CD4-positive, alpha-beta memory T cell (primary cell): ENCODE measurements at regions of chr9 and their contacts with region 1.

Region 1: DNA sequence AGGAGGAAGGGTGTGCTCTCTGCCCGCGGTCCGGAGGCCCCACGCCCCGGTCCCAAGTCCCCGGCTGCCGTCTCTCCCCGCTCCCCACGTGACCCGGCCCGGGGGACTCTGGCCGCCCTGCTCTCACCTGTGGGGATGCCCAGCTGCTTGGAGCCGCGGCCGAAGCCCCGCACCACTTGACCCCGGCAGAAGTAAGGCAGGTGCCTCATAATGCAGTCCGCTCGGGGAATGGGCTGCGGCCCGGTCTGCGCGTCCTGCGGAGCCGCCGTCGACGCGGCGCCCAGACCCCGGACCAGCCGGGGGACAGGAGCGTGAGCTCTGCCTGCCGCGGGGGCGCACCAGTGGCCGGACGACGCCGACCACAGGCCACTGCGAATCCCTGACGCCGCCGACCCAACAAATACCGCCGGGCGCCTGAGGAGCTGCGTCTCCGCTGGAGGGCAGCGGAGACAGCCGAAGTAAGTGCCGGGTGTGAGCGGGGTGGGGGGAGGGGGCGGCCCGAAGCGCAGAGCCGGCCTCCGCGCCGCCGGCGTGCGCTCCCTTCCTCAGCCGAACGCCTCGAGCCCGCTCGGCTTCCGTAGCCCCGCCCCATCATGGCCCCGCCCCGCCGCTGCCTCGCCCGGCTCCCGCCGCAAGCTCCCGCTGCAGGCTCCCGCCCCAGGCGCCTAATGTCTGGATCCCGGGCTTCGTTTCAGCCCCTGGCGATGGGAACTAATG is at the start of gene RFK:
- DNase-seq: peak; percentile 90 to 96 (median 93)
- H3K4me3 ChIP-seq: peak within 1 kb of the TSS; percentile 72 to 74
- H3K4me3 Mint-ChIP-seq: peak within 1 kb of the TSS; percentile 91 to 98 (median 95)
- H3K27ac ChIP-seq: peak within 1 kb of the TSS; percentile 79
- H3K27ac Mint-ChIP-seq: peak within 1 kb of the TSS; percentile 94 to 100 (median 98)
- H3K4me1 ChIP-seq: peaks cover 25% of the 10 kb centered on the region
- H3K4me1 Mint-ChIP-seq: peaks cover 12 to 38% (median 25%) of the 10 kb centered on the region in 4 donors
- H3K27me3 ChIP-seq: no peaks in the 10 kb centered on the region
- H3K27me3 Mint-ChIP-seq: no peaks in the 10 kb centered on the region
- total RNA-seq, gene RFK: 13.5 to 16.8 TPM

Region 2: GRCh38 chr9:75890472-75891276 is 503.4 kb before region 1 on chr9 and contains the start of gene PCSK5:
- CTCF ChIA-PET with region 1: no interaction called
- POLR2A ChIA-PET with region 1: interaction called, 10 read pairs
- intact Hi-C with region 1: loop called (anchors 1 kb)
- DNase-seq: peak; percentile 81 to 91 (median 84)
- H3K4me3 ChIP-seq: peak within 1 kb of the TSS; percentile 58 to 79
- H3K4me3 Mint-ChIP-seq: peak within 1 kb of the TSS; percentile 93 to 98 (median 94)
- H3K27ac ChIP-seq: peak within 1 kb of the TSS; percentile 59
- H3K27ac Mint-ChIP-seq: peak within 1 kb of the TSS; percentile 76 to 94 (median 93)
- H3K4me1 ChIP-seq: peaks cover 24% of the 10 kb centered on the region
- H3K4me1 Mint-ChIP-seq: peaks cover 22 to 51% (median 37%) of the 10 kb centered on the region in 4 donors
- H3K27me3 ChIP-seq: no peaks in the 10 kb centered on the region
- H3K27me3 Mint-ChIP-seq: peaks cover 2 to 7% of the 10 kb centered on the region in 2 donors
- total RNA-seq, gene PCSK5: 7.9 to 8.4 TPM

Region 3: GRCh38 chr9:76379512-76379911 is 14.6 kb before region 1 on chr9:
- CTCF ChIA-PET with region 1: interaction called, 16 read pairs
- POLR2A ChIA-PET with region 1: interaction called, 21 read pairs
- intact Hi-C with region 1: no loop called
- DNase-seq: no peak
- H3K4me3 ChIP-seq: no peak overlapping the region
- H3K4me3 Mint-ChIP-seq: no peak overlapping the region
- H3K27ac ChIP-seq: no peak overlapping the region
- H3K27ac Mint-ChIP-seq: peak overlapping the region in 1 of 7 donors; percentile 49
- H3K4me1 ChIP-seq: no peaks in the 10 kb centered on the region
- H3K4me1 Mint-ChIP-seq: no peaks in the 10 kb centered on the region
- H3K27me3 ChIP-seq: no peaks in the 10 kb centered on the region
- H3K27me3 Mint-ChIP-seq: no peaks in the 10 kb centered on the region

Region 4: DNA sequence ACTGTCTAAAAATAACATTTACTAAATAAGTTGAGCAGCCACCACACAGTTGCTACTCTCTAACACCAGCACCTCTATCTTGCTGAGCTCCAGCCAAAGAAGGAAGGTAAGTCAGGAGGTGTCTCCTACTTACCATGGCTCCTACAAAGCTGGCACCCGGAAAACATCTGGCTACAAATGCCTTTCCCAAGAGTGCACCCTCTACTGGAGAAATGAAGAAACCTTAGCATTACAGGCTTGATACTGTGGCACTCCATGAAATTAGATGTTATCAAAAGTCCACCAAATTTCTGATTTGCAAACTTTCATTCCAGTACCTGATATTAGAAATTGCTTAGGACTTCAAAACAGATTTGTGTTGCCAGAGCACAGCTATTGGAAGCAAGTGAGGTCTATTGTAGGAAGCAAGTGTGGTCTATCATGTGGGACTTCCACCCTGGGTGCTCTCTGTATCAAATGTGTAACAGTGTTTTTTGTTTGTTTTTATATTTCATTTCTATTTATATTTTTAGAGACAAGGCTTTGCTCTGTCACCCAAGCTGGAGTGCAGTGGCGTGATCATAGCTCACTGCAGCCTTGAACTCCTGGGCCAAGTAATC is 25.8 kb after region 1 on chr9:
- CTCF ChIA-PET with region 1: interaction called, 11 read pairs
- POLR2A ChIA-PET with region 1: interaction called, 6 read pairs
- intact Hi-C with region 1: loop called (anchors 2 kb)
- DNase-seq: no peak
- H3K4me3 ChIP-seq: no peak overlapping the region
- H3K4me3 Mint-ChIP-seq: no peak overlapping the region
- H3K27ac ChIP-seq: no peak overlapping the region
- H3K27ac Mint-ChIP-seq: no peak overlapping the region
- H3K4me1 ChIP-seq: peaks cover 32% of the 10 kb centered on the region
- H3K4me1 Mint-ChIP-seq: peaks cover 16 to 59% (median 30%) of the 10 kb centered on the region in 4 donors
- H3K27me3 ChIP-seq: no peaks in the 10 kb centered on the region
- H3K27me3 Mint-ChIP-seq: no peaks in the 10 kb centered on the region

Region 5: GRCh38 chr9:76451234-76451633 is 57.1 kb after region 1 on chr9:
- CTCF ChIA-PET with region 1: interaction called, 20 read pairs
- POLR2A ChIA-PET with region 1: interaction called, 11 read pairs
- intact Hi-C with region 1: loop called (anchors 1 kb)
- DNase-seq: no peak
- H3K4me3 ChIP-seq: no peak overlapping the region
- H3K4me3 Mint-ChIP-seq: no peak overlapping the region
- H3K27ac ChIP-seq: no peak overlapping the region
- H3K27ac Mint-ChIP-seq: no peak overlapping the region
- H3K4me1 ChIP-seq: peaks cover 10% of the 10 kb centered on the region
- H3K4me1 Mint-ChIP-seq: peaks cover 4 to 12% (median 7%) of the 10 kb centered on the region in 4 donors
- H3K27me3 ChIP-seq: no peaks in the 10 kb centered on the region
- H3K27me3 Mint-ChIP-seq: no peaks in the 10 kb centered on the region

Region 6: DNA sequence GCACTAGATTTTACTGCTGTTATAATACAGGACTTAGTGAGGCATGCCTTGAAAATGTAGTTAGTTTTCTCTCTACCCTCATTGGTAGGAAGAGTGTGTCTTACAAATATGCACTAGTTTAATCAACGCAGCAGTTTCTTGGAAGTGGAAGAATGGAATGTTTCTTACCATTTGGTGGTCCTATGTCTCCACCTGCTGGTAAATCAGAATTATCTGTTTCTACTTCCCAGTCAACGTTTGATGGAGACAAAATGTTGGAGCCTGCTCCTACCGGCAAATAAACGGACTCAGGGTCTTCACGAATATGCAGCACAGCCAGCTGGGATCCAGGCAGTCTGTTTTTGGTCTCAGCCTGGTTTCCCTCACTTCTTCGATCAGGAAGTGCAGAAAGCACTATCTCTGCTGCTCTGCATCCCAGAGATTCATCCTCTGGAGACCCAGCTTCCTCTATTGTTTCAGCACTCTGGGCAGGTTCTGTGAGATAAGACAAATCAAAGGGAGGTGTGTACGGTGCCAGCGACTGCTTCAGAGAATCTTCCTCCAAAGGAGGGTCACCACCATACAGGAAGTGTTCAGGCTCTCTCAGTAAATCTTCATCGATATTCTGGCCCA is 310.6 kb after region 1 on chr9:
- CTCF ChIA-PET with region 1: interaction called, 29 read pairs
- POLR2A ChIA-PET with region 1: interaction called, 4 read pairs
- intact Hi-C with region 1: no loop called
- DNase-seq: peak in 4 of 5 donors; percentile 46 to 56 (median 50)
- H3K4me3 ChIP-seq: no peak overlapping the region
- H3K4me3 Mint-ChIP-seq: no peak overlapping the region
- H3K27ac ChIP-seq: no peak overlapping the region
- H3K27ac Mint-ChIP-seq: no peak overlapping the region
- H3K4me1 ChIP-seq: no peaks in the 10 kb centered on the region
- H3K4me1 Mint-ChIP-seq: peaks cover 0 to 6% (median 3%) of the 10 kb centered on the region in 4 donors
- H3K27me3 ChIP-seq: no peaks in the 10 kb centered on the region
- H3K27me3 Mint-ChIP-seq: peaks cover 10 to 29% of the 10 kb centered on the region in 2 donors